ENCODE measurements at regions of chr2 and their contacts with region 1.

Region 1: GRCh38 chr2:23926750-23927571 is at the start of gene ATAD2B:
- DNase-seq: peak; percentile 99
- ATAC-seq: peak; percentile 81
- H3K4me3 ChIP-seq: peak within 1 kb of the TSS; percentile 67 to 100 (median 98)
- H3K4me3 Mint-ChIP-seq: peak within 1 kb of the TSS; percentile 96
- H3K27ac ChIP-seq: peak within 1 kb of the TSS; percentile 96 to 99
- H3K27ac Mint-ChIP-seq: peak within 1 kb of the TSS; percentile 97
- H3K4me1 ChIP-seq: peaks cover 18 to 26% of the 10 kb centered on the region in 2 donors
- H3K4me1 Mint-ChIP-seq: peaks cover 49% of the 10 kb centered on the region
- H3K27me3 ChIP-seq: no peaks in the 10 kb centered on the region
- H3K27me3 Mint-ChIP-seq: no peaks in the 10 kb centered on the region
- CTCF ChIP-seq: peak; percentile 81
- total RNA-seq, gene ATAD2B: 90.8 and 95.4 TPM in 2 replicates

Region 2: DNA sequence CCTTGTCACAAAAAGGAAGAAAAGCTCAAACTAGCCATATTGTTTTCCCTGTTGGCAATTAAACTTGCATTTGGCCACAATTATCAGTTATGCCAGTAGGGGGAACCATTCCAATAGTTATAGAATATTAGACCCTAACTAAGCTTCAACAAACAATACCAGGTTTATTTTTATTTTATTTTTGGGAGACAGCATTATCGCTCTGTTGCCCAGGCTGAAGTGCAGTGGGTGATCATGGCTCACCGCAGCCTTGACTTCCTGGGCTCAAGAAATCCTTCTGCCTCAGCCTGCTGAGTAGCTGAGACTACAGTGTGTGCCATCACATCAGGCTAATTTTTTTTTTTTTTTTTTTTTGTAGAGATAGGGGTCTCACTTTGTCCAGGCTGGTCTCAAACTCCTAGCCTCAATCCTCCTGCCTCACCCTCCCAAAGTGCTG is 102.2 kb before region 1 on chr2:
- CTCF ChIA-PET with region 1: interaction called, 58 read pairs
- POLR2A ChIA-PET with region 1: no interaction called
- intact Hi-C with region 1: loop called (anchors 2 kb)
- DNase-seq: peak; percentile 76
- ATAC-seq: peak; percentile 41
- H3K4me3 ChIP-seq: no peak overlapping the region
- H3K4me3 Mint-ChIP-seq: no peak overlapping the region
- H3K27ac ChIP-seq: no peak overlapping the region
- H3K27ac Mint-ChIP-seq: no peak overlapping the region
- H3K4me1 ChIP-seq: no peaks in the 10 kb centered on the region
- H3K4me1 Mint-ChIP-seq: no peaks in the 10 kb centered on the region
- H3K27me3 ChIP-seq: no peaks in the 10 kb centered on the region
- H3K27me3 Mint-ChIP-seq: no peaks in the 10 kb centered on the region
- CTCF ChIP-seq: peak; percentile 91

Region 3: GRCh38 chr2:23939987-23940717 is 13.2 kb after region 1 on chr2 and contains the start of gene UBXN2A:
- CTCF ChIA-PET with region 1: interaction called, 66 read pairs
- POLR2A ChIA-PET with region 1: interaction called, 47 read pairs
- intact Hi-C with region 1: loop called (anchors 1 kb)
- DNase-seq: peak; percentile 91
- ATAC-seq: peak; percentile 84
- H3K4me3 ChIP-seq: peak within 1 kb of the TSS; percentile 65 to 91 (median 80)
- H3K4me3 Mint-ChIP-seq: peak within 1 kb of the TSS; percentile 91
- H3K27ac ChIP-seq: peak within 1 kb of the TSS; percentile 36 to 72
- H3K27ac Mint-ChIP-seq: peak within 1 kb of the TSS; percentile 85
- H3K4me1 ChIP-seq: peaks cover 12 to 18% of the 10 kb centered on the region in 2 donors
- H3K4me1 Mint-ChIP-seq: peaks cover 21% of the 10 kb centered on the region
- H3K27me3 ChIP-seq: no peaks in the 10 kb centered on the region
- H3K27me3 Mint-ChIP-seq: no peaks in the 10 kb centered on the region
- CTCF ChIP-seq: no peak
- total RNA-seq, gene UBXN2A: 13.4 and 14.2 TPM in 2 replicates

Region 4: DNA sequence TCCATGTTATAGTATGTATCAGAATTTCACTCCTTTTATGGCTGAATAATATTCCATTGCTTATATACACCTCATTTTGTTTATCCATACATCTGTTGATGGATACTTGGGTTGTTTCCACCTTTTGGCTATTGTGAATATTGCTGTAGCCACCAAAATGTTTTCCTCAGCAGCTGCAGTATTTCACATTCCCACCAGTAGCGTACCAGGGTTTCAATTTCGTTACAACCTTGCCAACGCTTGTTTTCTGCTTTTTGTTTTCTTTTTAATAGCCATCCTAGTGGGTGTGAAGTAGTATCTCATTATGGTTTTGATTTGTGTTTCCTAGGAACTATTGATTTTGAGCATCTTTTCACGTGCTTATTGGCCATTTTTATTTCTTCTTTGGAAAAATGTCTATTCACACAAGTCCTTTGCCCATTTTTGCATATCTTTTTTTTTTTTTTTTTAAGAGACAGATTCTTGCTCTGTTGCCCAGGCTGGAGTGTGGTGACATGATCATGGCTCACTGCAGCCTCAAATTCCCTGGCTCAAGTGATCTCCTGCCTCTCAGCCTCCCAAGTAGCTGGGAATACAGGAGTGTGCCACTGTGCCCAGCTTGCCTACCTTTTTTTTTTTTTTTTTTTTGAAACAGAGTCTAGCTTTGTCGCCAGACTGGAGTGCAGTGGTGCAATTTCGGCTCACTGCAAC is 27.5 kb after region 1 on chr2:
- CTCF ChIA-PET with region 1: no interaction called
- POLR2A ChIA-PET with region 1: no interaction called
- intact Hi-C with region 1: no loop called
- DNase-seq: no peak
- ATAC-seq: no peak
- H3K4me3 ChIP-seq: no peak overlapping the region
- H3K4me3 Mint-ChIP-seq: no peak overlapping the region
- H3K27ac ChIP-seq: no peak overlapping the region
- H3K27ac Mint-ChIP-seq: no peak overlapping the region
- H3K4me1 ChIP-seq: no peaks in the 10 kb centered on the region
- H3K4me1 Mint-ChIP-seq: peaks cover 2% of the 10 kb centered on the region
- H3K27me3 ChIP-seq: no peaks in the 10 kb centered on the region
- H3K27me3 Mint-ChIP-seq: no peaks in the 10 kb centered on the region
- CTCF ChIP-seq: no peak

Region 5: GRCh38 chr2:24010477-24011249 is 83.7 kb after region 1 on chr2:
- CTCF ChIA-PET with region 1: interaction called, 12 read pairs
- POLR2A ChIA-PET with region 1: interaction called, 3 read pairs
- intact Hi-C with region 1: no loop called
- DNase-seq: no peak
- ATAC-seq: no peak
- H3K4me3 ChIP-seq: no peak overlapping the region
- H3K4me3 Mint-ChIP-seq: no peak overlapping the region
- H3K27ac ChIP-seq: no peak overlapping the region
- H3K27ac Mint-ChIP-seq: no peak overlapping the region
- H3K4me1 ChIP-seq: peaks cover 13 to 15% of the 10 kb centered on the region in 2 donors
- H3K4me1 Mint-ChIP-seq: peaks cover 7% of the 10 kb centered on the region
- H3K27me3 ChIP-seq: peaks cover 0 to 34% (median 15%) of the 10 kb centered on the region in 4 experiments
- H3K27me3 Mint-ChIP-seq: peaks cover 29% of the 10 kb centered on the region
- CTCF ChIP-seq: no peak

Region 6: GRCh38 chr2:24026233-24026632 is 99.3 kb after region 1 on chr2:
- CTCF ChIA-PET with region 1: no interaction called
- POLR2A ChIA-PET with region 1: no interaction called
- intact Hi-C with region 1: no loop called
- DNase-seq: no peak
- ATAC-seq: no peak
- H3K4me3 ChIP-seq: no peak overlapping the region
- H3K4me3 Mint-ChIP-seq: no peak overlapping the region
- H3K27ac ChIP-seq: no peak overlapping the region
- H3K27ac Mint-ChIP-seq: no peak overlapping the region
- H3K4me1 ChIP-seq: no peaks in the 10 kb centered on the region
- H3K4me1 Mint-ChIP-seq: no peaks in the 10 kb centered on the region
- H3K27me3 ChIP-seq: no peaks in the 10 kb centered on the region
- H3K27me3 Mint-ChIP-seq: no peaks in the 10 kb centered on the region
- CTCF ChIP-seq: no peak

Region 7: GRCh38 chr2:24075915-24076848 is 149.2 kb after region 1 on chr2 and contains the start of gene SF3B6:
- CTCF ChIA-PET with region 1: interaction called, 14 read pairs
- POLR2A ChIA-PET with region 1: interaction called, 43 read pairs
- intact Hi-C with region 1: loop called (anchors 1 kb)
- DNase-seq: peak; percentile 100
- ATAC-seq: peak; percentile 85
- H3K4me3 ChIP-seq: peak within 1 kb of the TSS; percentile 83 to 99 (median 96)
- H3K4me3 Mint-ChIP-seq: peak within 1 kb of the TSS; percentile 98
- H3K27ac ChIP-seq: peak within 1 kb of the TSS; percentile 84 to 87
- H3K27ac Mint-ChIP-seq: peak within 1 kb of the TSS; percentile 99
- H3K4me1 ChIP-seq: peaks cover 15 to 18% of the 10 kb centered on the region in 2 donors
- H3K4me1 Mint-ChIP-seq: peaks cover 33% of the 10 kb centered on the region
- H3K27me3 ChIP-seq: no peaks in the 10 kb centered on the region
- H3K27me3 Mint-ChIP-seq: no peaks in the 10 kb centered on the region
- CTCF ChIP-seq: no peak
- total RNA-seq, gene SF3B6: 45.0 and 47.2 TPM in 2 replicates

Region 8: GRCh38 chr2:24123195-24123921 is 196.4 kb after region 1 on chr2 and contains the starts of genes FAM228B and PFN4:
- CTCF ChIA-PET with region 1: no interaction called
- POLR2A ChIA-PET with region 1: interaction called, 5 read pairs
- intact Hi-C with region 1: loop called (anchors 1 kb)
- DNase-seq: peak; percentile 87
- ATAC-seq: peak; percentile 94
- H3K4me3 ChIP-seq: peak within 1 kb of the TSS; percentile 62 to 80 (median 73)
- H3K4me3 Mint-ChIP-seq: peak within 1 kb of the TSS; percentile 90
- H3K27ac ChIP-seq: peak within 1 kb of the TSS; percentile 70 to 80
- H3K27ac Mint-ChIP-seq: peak within 1 kb of the TSS; percentile 95
- H3K4me1 ChIP-seq: peaks cover 5 to 18% of the 10 kb centered on the region in 2 donors
- H3K4me1 Mint-ChIP-seq: peaks cover 20% of the 10 kb centered on the region
- H3K27me3 ChIP-seq: no peaks in the 10 kb centered on the region
- H3K27me3 Mint-ChIP-seq: no peaks in the 10 kb centered on the region
- CTCF ChIP-seq: no peak
- total RNA-seq, gene FAM228B: 47.2 and 49.6 TPM in 2 replicates
- total RNA-seq, gene PFN4: 0.39 and 0.66 TPM in 2 replicates